ENCODE measurements at regions of chr17 and their contacts with region 1.

Region 1: GRCh38 chr17:38868817-38869525 is 887 bp upstream of the LASP1 start:
- DNase-seq: peak; percentile 95
- ATAC-seq: peak; percentile 56
- H3K4me3 Mint-ChIP-seq: peak overlapping the region; percentile 93
- H3K27ac Mint-ChIP-seq: peak overlapping the region; percentile 93
- H3K4me1 Mint-ChIP-seq: peaks cover 44% of the 10 kb centered on the region
- H3K27me3 Mint-ChIP-seq: peaks cover 2% of the 10 kb centered on the region

Region 2: GRCh38 chr17:38752119-38752929 is 116.6 kb before region 1 on chr17 and contains the start of gene PSMB3:
- CTCF ChIA-PET with region 1: interaction called, 5 read pairs
- POLR2A ChIA-PET with region 1: no interaction called
- intact Hi-C with region 1: loop called (anchors 1 to 5 kb)
- DNase-seq: peak; percentile 99
- ATAC-seq: peak; percentile 95
- H3K4me3 Mint-ChIP-seq: peak within 1 kb of the TSS; percentile 93
- H3K27ac Mint-ChIP-seq: peak within 1 kb of the TSS; percentile 99
- H3K4me1 Mint-ChIP-seq: peaks cover 43% of the 10 kb centered on the region
- H3K27me3 Mint-ChIP-seq: peaks cover 23% of the 10 kb centered on the region
- total RNA-seq, gene PSMB3: 337 to 396 TPM

Region 3: DNA sequence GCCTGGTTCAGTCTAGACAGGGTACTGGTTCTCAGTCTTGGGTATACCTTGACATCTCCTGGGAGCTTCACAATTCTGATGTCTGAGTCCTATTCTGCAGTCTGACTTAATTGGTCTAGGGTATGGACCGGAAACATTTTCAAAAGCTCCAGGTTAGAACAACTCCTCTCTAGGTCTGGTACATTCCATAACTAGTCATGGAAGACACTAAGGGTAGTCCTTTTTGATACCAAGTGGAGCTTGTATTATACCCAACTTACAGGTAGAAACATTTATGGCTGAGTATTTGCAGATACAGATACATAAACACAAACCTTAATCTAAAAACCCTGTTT is 20.4 kb before region 1 on chr17:
- CTCF ChIA-PET with region 1: interaction called, 4 read pairs
- POLR2A ChIA-PET with region 1: interaction called, 36 read pairs
- intact Hi-C with region 1: loop called (anchors 1 kb)
- DNase-seq: no peak
- ATAC-seq: no peak
- H3K4me3 Mint-ChIP-seq: no peak overlapping the region
- H3K27ac Mint-ChIP-seq: no peak overlapping the region
- H3K4me1 Mint-ChIP-seq: peaks cover 33% of the 10 kb centered on the region
- H3K27me3 Mint-ChIP-seq: no peaks in the 10 kb centered on the region

Region 4: GRCh38 chr17:38898812-38899348 is 29.9 kb after region 1 on chr17:
- CTCF ChIA-PET with region 1: interaction called, 5 read pairs
- POLR2A ChIA-PET with region 1: interaction called, 4 read pairs
- intact Hi-C with region 1: loop called (anchors 1 kb)
- DNase-seq: peak; percentile 95
- ATAC-seq: peak; percentile 91
- H3K4me3 Mint-ChIP-seq: peak overlapping the region; percentile 70
- H3K27ac Mint-ChIP-seq: peak overlapping the region; percentile 98
- H3K4me1 Mint-ChIP-seq: peaks cover 65% of the 10 kb centered on the region
- H3K27me3 Mint-ChIP-seq: no peaks in the 10 kb centered on the region

Region 5: DNA sequence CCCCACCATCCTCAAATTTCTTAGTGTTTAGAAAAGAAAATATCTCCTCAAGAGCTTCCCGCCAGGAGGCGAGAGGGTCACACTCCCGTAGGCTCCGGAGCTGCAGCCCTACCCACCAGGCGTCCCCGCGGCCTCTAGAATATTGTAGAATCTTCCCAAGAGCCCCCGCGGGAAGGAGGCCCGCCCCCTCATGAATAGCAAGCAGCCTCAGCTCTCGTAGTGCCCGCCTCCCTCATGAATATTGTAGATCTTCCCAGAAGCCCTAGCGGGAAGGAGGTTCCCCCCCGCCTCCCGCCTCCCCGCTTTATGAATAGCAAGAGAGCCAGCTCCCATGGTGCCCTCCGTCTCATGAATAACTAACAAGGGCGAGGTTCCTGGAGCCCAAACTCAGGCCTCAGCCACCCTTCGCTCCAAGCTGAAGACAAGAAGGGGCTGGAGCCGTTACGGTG is 98.3 kb after region 1 on chr17 and contains the start of gene FBXO47:
- CTCF ChIA-PET with region 1: interaction called, 4 read pairs
- POLR2A ChIA-PET with region 1: no interaction called
- intact Hi-C with region 1: loop called (anchors 1 to 5 kb)
- DNase-seq: peak; percentile 91
- ATAC-seq: peak; percentile 98
- H3K4me3 Mint-ChIP-seq: peak within 1 kb of the TSS; percentile 64
- H3K27ac Mint-ChIP-seq: peak within 1 kb of the TSS; percentile 87
- H3K4me1 Mint-ChIP-seq: peaks cover 16% of the 10 kb centered on the region
- H3K27me3 Mint-ChIP-seq: no peaks in the 10 kb centered on the region
- total RNA-seq, gene FBXO47: 0.11 to 0.16 TPM

Region 6: GRCh38 chr17:39401412-39402243 is 532.7 kb after region 1 on chr17 and contains the start of gene FBXL20:
- CTCF ChIA-PET with region 1: no interaction called
- POLR2A ChIA-PET with region 1: no interaction called
- intact Hi-C with region 1: loop called in 1 of 2 experiments (anchors 5 kb)
- DNase-seq: peak; percentile 97
- ATAC-seq: peak; percentile 63
- H3K4me3 Mint-ChIP-seq: peak within 1 kb of the TSS; percentile 91
- H3K27ac Mint-ChIP-seq: peak within 1 kb of the TSS; percentile 92
- H3K4me1 Mint-ChIP-seq: peaks cover 48% of the 10 kb centered on the region
- H3K27me3 Mint-ChIP-seq: no peaks in the 10 kb centered on the region
- total RNA-seq, gene FBXL20: 16.9 to 18.9 TPM

Measured in activated CD4-positive, alpha-beta T cell treated with anti-CD3 and anti-CD28 coated beads for 36 hours (primary cell).